Psoas muscle (tissue), 8 donors: ENCODE measurements at regions of chr20 and their contacts with region 1.

Region 1: GRCh38 chr20:19974626-19975435 is 42.3 kb upstream of the NAA20 start:
- DNase-seq: peak; percentile 90 to 95
- ATAC-seq: peak; percentile 90 to 93 (median 92)
- H3K4me3 ChIP-seq: peak overlapping the region; percentile 64
- H3K27ac ChIP-seq: peak overlapping the region; percentile 91
- H3K4me1 ChIP-seq: peaks cover 67% of the 10 kb centered on the region
- H3K27me3 ChIP-seq: no peaks in the 10 kb centered on the region
- CTCF ChIP-seq: no peak

Region 2: GRCh38 chr20:19913927-19914614 is 60.8 kb before region 1 on chr20:
- intact Hi-C with region 1: no loop called
- DNase-seq: no peak
- ATAC-seq: no peak
- H3K4me3 ChIP-seq: no peak overlapping the region
- H3K27ac ChIP-seq: no peak overlapping the region
- H3K4me1 ChIP-seq: peaks cover 35% of the 10 kb centered on the region
- H3K27me3 ChIP-seq: no peaks in the 10 kb centered on the region
- CTCF ChIP-seq: no peak

Region 3: DNA sequence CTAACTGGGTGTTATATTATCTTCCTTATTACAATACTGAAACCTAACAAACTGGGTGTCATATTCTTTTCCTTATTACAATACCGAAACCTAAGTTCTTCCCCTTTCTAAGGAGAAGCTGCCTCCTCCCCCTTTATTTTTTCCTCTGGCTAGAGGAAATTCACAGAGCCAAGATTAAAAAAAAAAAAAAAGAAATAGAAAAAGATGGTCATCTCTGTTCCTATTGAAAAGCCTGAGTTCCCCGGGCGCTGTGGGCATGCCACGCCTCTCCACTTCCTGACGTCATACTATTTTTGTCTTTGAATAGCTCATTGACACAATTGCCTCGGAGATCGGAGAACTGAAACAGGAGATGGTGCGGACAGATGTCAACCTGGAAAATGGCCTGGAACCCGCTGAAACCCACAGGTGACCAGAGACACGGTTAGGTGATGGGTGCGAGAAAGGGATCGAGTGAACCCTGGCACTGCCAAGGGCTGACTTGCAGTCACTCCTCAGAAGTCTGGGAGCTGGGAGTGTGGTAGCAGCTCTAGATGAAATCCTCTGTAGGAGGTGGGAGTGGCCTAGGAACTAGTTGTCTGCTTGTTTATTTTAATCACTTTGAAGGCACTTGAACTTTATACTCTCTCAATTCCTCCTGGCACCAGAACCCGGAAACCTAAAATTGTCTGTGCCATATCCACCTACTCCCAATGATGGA is 39.9 kb before region 1 on chr20:
- intact Hi-C with region 1: loop called (anchors 5 kb)
- DNase-seq: peak; percentile 49 to 66
- ATAC-seq: peak; percentile 76 to 88 (median 82)
- H3K4me3 ChIP-seq: peak overlapping the region; percentile 47
- H3K27ac ChIP-seq: peak overlapping the region; percentile 76
- H3K4me1 ChIP-seq: peaks cover 28% of the 10 kb centered on the region
- H3K27me3 ChIP-seq: no peaks in the 10 kb centered on the region
- CTCF ChIP-seq: no peak